Common myeloid progenitor, CD34-positive (primary cell): ENCODE measurements at regions of chr3 and their contacts with region 1.

Region 1: DNA sequence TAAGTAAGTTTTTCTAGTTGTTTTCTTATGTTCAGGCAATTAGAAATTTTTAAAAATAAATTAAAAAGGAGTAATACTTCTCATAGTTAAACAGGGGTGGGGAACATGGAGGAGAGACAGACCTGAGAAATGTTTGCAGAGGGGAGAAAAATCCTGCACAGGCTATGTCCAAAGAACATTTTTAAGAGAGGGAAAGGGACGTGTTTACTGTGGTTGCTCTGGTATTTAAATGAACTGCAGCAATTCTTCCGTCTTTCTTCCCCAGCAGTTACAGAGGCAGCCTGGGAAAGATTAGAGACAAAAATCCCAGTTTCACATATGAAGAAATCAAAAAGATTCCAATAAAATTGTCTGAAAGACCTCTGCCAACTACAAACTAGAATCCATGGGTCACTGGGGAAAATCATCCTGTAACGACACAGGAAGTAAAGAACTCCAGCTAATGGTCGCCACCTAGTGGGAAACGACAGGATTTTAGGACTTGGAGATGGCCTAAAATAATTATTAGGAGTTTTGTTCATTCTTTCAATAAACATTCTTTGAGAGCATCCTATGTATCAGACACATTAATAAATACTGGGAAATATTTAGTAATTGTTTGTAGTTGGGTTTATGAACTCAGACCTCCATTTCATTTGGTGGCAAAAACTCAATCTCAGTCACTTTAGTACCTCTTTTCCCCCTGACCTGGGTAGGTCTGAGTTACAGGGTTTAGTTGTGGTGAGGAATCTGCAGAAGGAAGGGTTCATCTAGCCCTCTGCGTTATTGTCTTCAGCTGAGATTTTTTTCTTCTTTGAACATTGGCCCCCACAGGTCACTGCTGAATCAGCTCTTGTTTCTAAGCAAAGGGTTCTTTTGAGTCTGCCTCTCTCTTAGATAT is 69.9 kb upstream of the GOLIM4 start:
- DNase-seq: peak; percentile 77 to 83 (median 80)
- H3K4me3 ChIP-seq: peak overlapping the region in 5 of 7 experiments; percentile 37 to 72 (median 44)
- H3K27ac ChIP-seq: peak overlapping the region in 1 of 2 experiments; percentile 55
- H3K4me1 ChIP-seq: peaks cover 3 to 11% (median 5%) of the 10 kb centered on the region in 4 experiments
- H3K27me3 ChIP-seq: no peaks in the 10 kb centered on the region

Region 2: DNA sequence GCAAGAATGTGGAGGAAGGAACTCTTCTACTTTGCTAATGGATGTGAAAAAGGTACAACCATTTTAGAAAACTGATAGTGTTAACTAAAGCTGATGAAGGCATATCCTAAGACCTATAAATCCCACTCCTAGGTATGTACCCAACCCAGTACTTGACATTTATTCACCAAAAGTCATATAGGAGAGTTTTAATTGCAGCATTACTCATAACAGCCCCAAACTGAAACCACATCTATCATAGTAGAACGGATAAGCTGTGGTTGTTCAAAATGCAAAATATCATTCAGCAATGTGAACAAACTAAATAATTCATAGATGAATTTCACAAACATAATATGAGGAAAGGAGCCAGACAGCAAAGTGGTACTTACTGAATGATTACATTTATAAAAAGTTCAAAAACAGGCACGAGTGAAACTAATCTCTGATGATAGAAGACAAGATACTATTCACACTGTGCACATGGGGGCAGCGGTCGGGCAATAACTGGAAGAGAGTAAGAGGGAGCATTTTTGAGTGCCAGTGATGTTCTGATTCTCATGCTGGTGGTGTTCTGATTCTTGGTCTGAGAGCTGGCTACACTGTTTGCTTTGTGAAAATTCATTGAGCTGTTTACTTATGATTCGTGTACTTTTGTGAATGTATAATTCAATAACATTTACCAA is 104.2 kb before region 1 on chr3:
- CTCF ChIA-PET with region 1: interaction called, 270 read pairs
- POLR2A ChIA-PET with region 1: no interaction called
- DNase-seq: peak in 2 of 3 donors; percentile 19 to 33
- H3K4me3 ChIP-seq: no peak overlapping the region
- H3K27ac ChIP-seq: no peak overlapping the region
- H3K4me1 ChIP-seq: peaks cover 6 to 28% (median 14%) of the 10 kb centered on the region in 4 experiments
- H3K27me3 ChIP-seq: no peaks in the 10 kb centered on the region

Region 3: DNA sequence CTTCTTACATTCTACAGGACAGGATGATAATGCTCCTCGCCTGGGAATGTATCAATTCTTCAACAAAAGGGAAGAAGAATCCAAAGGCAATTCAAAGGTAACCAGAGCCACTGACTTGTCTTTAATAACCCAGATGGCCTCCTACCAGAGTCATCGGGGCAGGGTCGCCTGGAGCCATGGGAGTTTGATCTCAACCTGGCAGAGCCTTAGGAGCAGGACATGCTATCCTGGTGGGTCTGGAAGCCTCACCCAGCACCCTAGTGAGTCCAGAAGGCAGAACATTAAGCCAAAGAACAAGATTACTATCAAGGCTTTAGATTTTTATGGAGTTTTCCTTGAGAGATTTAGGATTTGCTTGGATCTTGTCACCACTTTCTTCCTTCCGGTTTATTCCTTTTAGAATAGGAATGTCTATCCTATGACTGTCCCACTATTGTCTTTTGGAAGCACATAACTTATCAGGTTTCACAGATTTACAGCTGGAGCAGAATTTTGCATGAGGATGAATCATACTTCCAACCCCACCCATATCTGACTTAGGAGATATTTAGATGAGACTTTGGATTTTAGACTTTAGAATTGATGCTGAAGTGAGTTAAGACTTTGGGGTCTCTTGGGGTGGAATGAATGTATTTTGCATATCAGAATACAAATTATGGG is 260.4 kb after region 1 on chr3:
- CTCF ChIA-PET with region 1: no interaction called
- POLR2A ChIA-PET with region 1: no interaction called
- DNase-seq: no peak
- H3K4me3 ChIP-seq: no peak overlapping the region
- H3K27ac ChIP-seq: no peak overlapping the region
- H3K4me1 ChIP-seq: peaks cover 0 to 24% (median 18%) of the 10 kb centered on the region in 4 experiments
- H3K27me3 ChIP-seq: no peaks in the 10 kb centered on the region